AG04450 (cell line): ENCODE measurements at regions of chr4 and their contacts with region 1.

Region 1: GRCh38 chr4:74874753-74875367 is 58.1 kb upstream of the PARM1 start:
- DNase-seq: peak; percentile 48
- H3K4me3 ChIP-seq: no peak overlapping the region
- H3K27ac ChIP-seq: no peak overlapping the region
- H3K27me3 ChIP-seq: no peaks in the 10 kb centered on the region
- CTCF ChIP-seq: peak; percentile 98

Region 2: GRCh38 chr4:74886490-74886889 is 11.6 kb after region 1 on chr4:
- CTCF ChIA-PET with region 1: interaction called, 16 read pairs
- POLR2A ChIA-PET with region 1: interaction called, 3 read pairs
- DNase-seq: no peak
- H3K4me3 ChIP-seq: no peak overlapping the region
- H3K27ac ChIP-seq: no peak overlapping the region
- H3K27me3 ChIP-seq: no peaks in the 10 kb centered on the region
- CTCF ChIP-seq: no peak

Region 3: DNA sequence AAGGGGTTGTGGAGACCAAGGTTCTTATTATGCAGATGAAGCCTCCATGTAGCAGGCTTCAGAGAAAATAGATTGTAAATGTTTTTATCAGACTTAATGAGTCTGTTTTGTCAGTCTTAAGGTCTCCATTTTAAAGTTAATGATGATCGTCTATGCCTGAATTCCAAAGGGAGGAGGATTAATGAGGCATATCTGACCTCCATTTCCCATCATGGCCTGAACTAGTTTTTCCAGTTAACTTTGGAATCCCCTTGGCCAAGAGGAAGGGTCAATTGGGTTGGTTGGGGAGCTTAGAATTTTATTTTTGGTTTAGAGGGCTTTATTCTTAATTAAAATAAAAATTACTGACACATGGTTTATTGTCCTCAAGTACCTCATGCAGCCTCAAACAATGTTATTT is 51.1 kb after region 1 on chr4:
- CTCF ChIA-PET with region 1: no interaction called
- POLR2A ChIA-PET with region 1: no interaction called
- DNase-seq: no peak
- H3K4me3 ChIP-seq: no peak overlapping the region
- H3K27ac ChIP-seq: no peak overlapping the region
- H3K27me3 ChIP-seq: peaks cover 9% of the 10 kb centered on the region
- CTCF ChIP-seq: no peak

Region 4: GRCh38 chr4:75289914-75290582 is 415.2 kb after region 1 on chr4:
- CTCF ChIA-PET with region 1: interaction called, 25 read pairs
- POLR2A ChIA-PET with region 1: no interaction called
- DNase-seq: no peak
- H3K4me3 ChIP-seq: no peak overlapping the region
- H3K27ac ChIP-seq: no peak overlapping the region
- H3K27me3 ChIP-seq: peaks cover 2% of the 10 kb centered on the region
- CTCF ChIP-seq: peak; percentile 18; the same call in 1 of the 2 replicates

Region 5: GRCh38 chr4:75469896-75470295 is 595.0 kb after region 1 on chr4:
- CTCF ChIA-PET with region 1: interaction called, 12 read pairs
- POLR2A ChIA-PET with region 1: no interaction called
- DNase-seq: no peak
- H3K4me3 ChIP-seq: no peak overlapping the region
- H3K27ac ChIP-seq: no peak overlapping the region
- H3K27me3 ChIP-seq: no peaks in the 10 kb centered on the region
- CTCF ChIP-seq: no peak

Region 6: DNA sequence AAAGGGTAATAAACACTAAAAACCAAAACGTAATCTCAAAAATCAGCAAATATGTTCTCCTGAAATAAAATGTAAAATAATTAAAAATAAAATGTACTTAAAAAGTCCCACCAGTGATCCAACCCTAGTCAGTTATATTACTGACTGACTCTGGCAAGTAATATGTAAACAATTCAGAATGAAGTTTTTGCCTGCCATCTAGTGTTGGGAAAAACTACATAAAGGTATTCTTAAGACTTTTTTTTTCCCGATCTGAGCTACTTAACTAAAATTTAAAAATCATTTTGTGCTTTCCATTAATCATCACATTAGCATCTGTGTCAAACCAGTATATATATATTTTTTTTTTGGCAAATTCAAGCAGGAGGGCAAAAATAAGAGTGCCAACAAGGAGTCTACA is 615.3 kb after region 1 on chr4:
- CTCF ChIA-PET with region 1: interaction called, 80 read pairs
- POLR2A ChIA-PET with region 1: no interaction called
- DNase-seq: peak; percentile 7
- H3K4me3 ChIP-seq: no peak overlapping the region
- H3K27ac ChIP-seq: no peak overlapping the region
- H3K27me3 ChIP-seq: no peaks in the 10 kb centered on the region
- CTCF ChIP-seq: peak; percentile 40